Activated CD4-positive, alpha-beta memory T cell treated with anti-CD3 and anti-CD28 coated beads for 36 hours (primary cell): ENCODE measurements at regions of chr12 and their contacts with region 1.

Region 1: DNA sequence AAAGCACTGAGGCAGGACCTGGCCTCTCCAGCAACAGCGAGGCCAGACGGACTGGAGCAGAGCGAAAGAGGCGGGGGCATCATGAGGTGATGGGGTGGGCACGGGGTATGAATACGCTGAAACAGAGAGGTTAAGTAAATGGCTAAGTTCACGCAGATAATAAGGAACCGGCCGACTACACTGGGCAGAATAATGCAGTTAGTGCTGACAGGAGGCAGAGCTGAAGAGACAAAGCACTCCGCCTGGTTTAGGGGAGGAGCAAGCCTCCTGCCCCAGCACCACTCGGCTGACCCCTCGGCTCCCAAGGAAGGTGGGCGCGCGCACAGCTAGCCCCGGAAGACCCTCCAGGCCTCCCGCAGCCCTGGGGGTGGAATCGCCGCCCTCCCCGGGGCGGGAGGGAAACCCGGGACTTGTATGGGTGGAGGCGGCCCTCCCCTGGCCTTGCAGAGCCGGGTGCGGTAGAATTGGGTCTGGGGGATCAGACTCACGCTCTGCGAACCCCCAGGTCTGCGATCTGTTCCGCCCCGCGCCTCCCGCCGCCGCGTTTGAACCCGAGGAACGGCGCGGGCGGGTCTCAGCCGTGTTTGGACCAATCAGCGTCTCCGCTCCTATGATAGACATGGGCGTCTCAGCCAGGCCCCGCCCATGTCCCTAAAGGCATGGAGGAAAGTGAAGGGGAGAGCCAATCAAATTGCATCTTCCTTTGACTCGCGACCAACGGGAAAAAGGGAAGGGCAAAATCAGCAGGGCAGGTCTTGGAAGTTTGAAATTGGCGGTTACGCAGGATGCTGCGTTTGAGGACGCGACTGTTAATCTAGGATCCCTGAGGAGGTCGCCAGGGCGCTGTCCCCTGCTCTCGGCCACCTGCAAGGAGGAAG is at the start of gene CIT:
- DNase-seq: peak; percentile 92
- H3K4me3 Mint-ChIP-seq: peak within 1 kb of the TSS; percentile 93
- H3K27ac Mint-ChIP-seq: peak within 1 kb of the TSS; percentile 30
- H3K4me1 Mint-ChIP-seq: peaks cover 15% of the 10 kb centered on the region
- H3K27me3 Mint-ChIP-seq: no peaks in the 10 kb centered on the region
- total RNA-seq, gene CIT: 57.5 to 61.7 TPM

Region 2: GRCh38 chr12:119667577-119668323 is 209.2 kb before region 1 on chr12 and contains the start of gene PRKAB1:
- CTCF ChIA-PET with region 1: no interaction called
- POLR2A ChIA-PET with region 1: no interaction called
- intact Hi-C with region 1: loop called (anchors 5 kb)
- DNase-seq: peak; percentile 98
- H3K4me3 Mint-ChIP-seq: peak within 1 kb of the TSS; percentile 82
- H3K27ac Mint-ChIP-seq: peak within 1 kb of the TSS; percentile 88
- H3K4me1 Mint-ChIP-seq: peaks cover 48% of the 10 kb centered on the region
- H3K27me3 Mint-ChIP-seq: no peaks in the 10 kb centered on the region
- total RNA-seq, gene PRKAB1: 27.3 to 29.3 TPM

Region 3: GRCh38 chr12:119749666-119750065 is 127.3 kb before region 1 on chr12:
- CTCF ChIA-PET with region 1: no interaction called
- POLR2A ChIA-PET with region 1: no interaction called
- intact Hi-C with region 1: no loop called
- DNase-seq: no peak
- H3K4me3 Mint-ChIP-seq: no peak overlapping the region
- H3K27ac Mint-ChIP-seq: no peak overlapping the region
- H3K4me1 Mint-ChIP-seq: no peaks in the 10 kb centered on the region
- H3K27me3 Mint-ChIP-seq: no peaks in the 10 kb centered on the region

Region 4: DNA sequence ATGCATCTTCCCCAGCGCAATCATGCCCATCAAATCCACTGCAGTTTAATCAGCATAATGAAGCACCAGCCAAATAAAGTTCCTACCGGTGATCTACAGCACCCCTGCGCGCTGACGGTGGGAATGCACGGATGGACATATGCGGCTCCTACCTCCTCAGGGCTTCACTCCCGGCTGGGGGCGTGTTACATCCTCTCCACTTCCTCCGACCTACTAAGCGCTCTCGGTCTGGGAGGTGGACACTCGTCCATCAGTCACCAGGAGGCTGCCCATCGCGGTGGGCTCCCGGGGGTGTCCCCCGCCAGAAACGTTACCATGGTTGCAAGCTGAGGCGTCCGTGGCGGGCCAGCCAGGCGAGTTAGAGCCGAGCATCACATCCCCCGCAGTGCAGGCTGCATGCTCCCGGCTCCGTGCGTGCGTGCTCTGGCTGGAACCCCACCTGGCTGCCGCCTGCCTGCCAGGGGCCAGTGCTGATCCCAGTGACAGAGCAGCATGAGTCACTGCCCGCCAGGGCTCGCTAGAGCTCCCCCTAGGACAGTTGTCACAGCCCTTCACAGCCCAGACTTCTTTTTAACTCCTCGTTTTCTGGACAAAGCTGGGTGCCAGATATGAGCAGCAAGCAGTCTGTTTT is 72.9 kb before region 1 on chr12:
- CTCF ChIA-PET with region 1: no interaction called
- POLR2A ChIA-PET with region 1: no interaction called
- intact Hi-C with region 1: no loop called
- DNase-seq: no peak
- H3K4me3 Mint-ChIP-seq: no peak overlapping the region
- H3K27ac Mint-ChIP-seq: no peak overlapping the region
- H3K4me1 Mint-ChIP-seq: peaks cover 5% of the 10 kb centered on the region
- H3K27me3 Mint-ChIP-seq: no peaks in the 10 kb centered on the region

Region 5: GRCh38 chr12:119902084-119902509 is 25.1 kb after region 1 on chr12:
- CTCF ChIA-PET with region 1: interaction called, 5 read pairs
- POLR2A ChIA-PET with region 1: no interaction called
- intact Hi-C with region 1: loop called (anchors 1 kb)
- DNase-seq: peak; percentile 89
- H3K4me3 Mint-ChIP-seq: no peak overlapping the region
- H3K27ac Mint-ChIP-seq: no peak overlapping the region
- H3K4me1 Mint-ChIP-seq: peaks cover 7% of the 10 kb centered on the region
- H3K27me3 Mint-ChIP-seq: no peaks in the 10 kb centered on the region